Heart right ventricle (tissue), 16 donors: ENCODE measurements at regions of chr4 and their contacts with region 1.

Region 1: GRCh38 chr4:153344131-153345010 is at the start of gene MND1:
- DNase-seq: peak; percentile 86 to 87
- ATAC-seq: peak; percentile 92 to 97 (median 95)
- H3K4me3 ChIP-seq: peak within 1 kb of the TSS; percentile 66 to 91 (median 81)
- H3K27ac ChIP-seq: peak within 1 kb of the TSS in 1 of 10 donors; percentile 64
- H3K4me1 ChIP-seq: peaks cover 2 to 29% (median 17%) of the 10 kb centered on the region in 9 donors
- H3K27me3 ChIP-seq: no peaks in the 10 kb centered on the region
- CTCF ChIP-seq: peak; percentile 79 to 99 (median 99)
- total RNA-seq, gene MND1: 0.25 to 1.7 (median 0.40) TPM in 5 of 10 donors, not detected in the others

Region 2: GRCh38 chr4:152820073-152820472 is 524.3 kb before region 1 on chr4:
- intact Hi-C with region 1: no loop called
- DNase-seq: no peak
- ATAC-seq: no peak
- H3K4me3 ChIP-seq: no peak overlapping the region
- H3K27ac ChIP-seq: no peak overlapping the region
- H3K4me1 ChIP-seq: peaks cover 0 to 27% (median 4%) of the 10 kb centered on the region in 9 donors
- H3K27me3 ChIP-seq: no peaks in the 10 kb centered on the region
- CTCF ChIP-seq: no peak

Region 3: DNA sequence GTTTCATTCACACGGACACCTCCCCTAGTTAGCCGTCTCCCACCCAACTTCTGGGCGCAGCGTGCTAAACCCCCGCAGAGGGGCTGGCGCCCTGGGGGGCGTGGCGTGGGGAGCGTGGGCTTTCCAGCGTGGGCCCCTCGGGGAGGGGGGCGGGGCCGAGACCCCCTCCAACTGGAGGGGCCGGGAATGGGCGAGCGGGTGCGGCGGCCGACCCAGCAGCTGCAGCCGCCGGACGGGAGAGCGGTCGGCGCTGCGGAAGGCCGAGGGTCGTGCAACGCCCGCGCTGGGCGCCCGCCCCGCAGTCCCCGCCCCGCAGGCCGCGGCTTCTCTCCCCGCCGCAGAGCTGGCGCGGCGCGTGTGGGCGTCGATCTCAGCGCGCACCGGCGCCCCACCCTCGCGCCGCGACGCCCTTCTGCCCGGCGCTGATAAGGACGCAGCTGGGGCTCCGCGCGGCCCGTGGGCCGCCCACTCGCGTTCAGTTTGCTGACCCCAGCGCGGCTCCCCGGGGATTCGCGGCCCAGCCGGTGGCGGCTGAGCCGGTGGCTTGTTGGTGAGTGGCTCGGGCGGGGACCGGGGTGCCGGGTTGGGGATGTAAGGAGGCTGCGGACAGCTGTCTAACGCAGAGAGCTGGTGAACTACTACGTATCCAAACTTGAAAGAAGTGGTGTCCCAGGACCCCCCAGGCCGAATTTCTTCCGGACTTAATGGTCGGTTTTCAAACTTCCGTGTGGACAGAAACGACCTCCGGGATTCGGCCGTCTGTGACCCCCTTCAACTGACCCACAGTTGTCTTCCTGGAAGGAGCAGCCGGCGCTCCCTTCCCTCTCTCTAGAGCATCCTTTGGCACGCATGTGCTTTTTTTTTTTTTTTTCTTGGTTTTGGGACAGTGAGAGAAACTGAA is 406.8 kb before region 1 on chr4:
- intact Hi-C with region 1: no loop called
- DNase-seq: peak; percentile 23 to 35
- ATAC-seq: peak; percentile 31 to 67 (median 52)
- H3K4me3 ChIP-seq: peak overlapping the region; percentile 37 to 65 (median 60)
- H3K27ac ChIP-seq: peak overlapping the region in 2 of 10 donors; percentile 19 to 26
- H3K4me1 ChIP-seq: peaks cover 0 to 31% (median 23%) of the 10 kb centered on the region in 9 donors
- H3K27me3 ChIP-seq: peaks cover 0 to 96% (median 61%) of the 10 kb centered on the region in 7 donors
- CTCF ChIP-seq: no peak

Region 4: GRCh38 chr4:153260553-153261300 is 83.6 kb before region 1 on chr4:
- intact Hi-C with region 1: no loop called
- DNase-seq: no peak
- ATAC-seq: no peak
- H3K4me3 ChIP-seq: no peak overlapping the region
- H3K27ac ChIP-seq: no peak overlapping the region
- H3K4me1 ChIP-seq: peaks cover 0 to 24% (median 4%) of the 10 kb centered on the region in 9 donors
- H3K27me3 ChIP-seq: peaks cover 0 to 11% (median 0%) of the 10 kb centered on the region in 7 donors
- CTCF ChIP-seq: no peak

Region 5: DNA sequence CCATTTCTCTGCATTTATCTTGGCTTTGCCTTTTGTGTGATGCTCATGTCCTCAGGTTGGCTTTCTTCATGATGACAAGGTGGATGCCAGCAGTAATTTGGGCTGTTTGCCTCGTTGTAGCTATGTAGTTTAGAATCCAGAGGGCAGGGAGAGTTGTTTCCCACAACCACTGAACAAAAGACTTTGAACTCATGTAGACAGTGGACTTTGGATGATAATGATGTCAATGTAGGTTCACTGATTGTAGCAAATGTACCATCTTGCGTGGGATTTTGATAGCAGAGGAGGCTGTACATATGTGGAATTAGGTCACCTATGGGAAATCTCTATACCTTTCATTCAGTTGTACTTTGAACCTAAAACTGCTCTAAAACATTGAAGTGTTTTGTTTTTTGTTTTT is 41.4 kb after region 1 on chr4:
- intact Hi-C with region 1: no loop called
- DNase-seq: no peak
- ATAC-seq: no peak
- H3K4me3 ChIP-seq: no peak overlapping the region
- H3K27ac ChIP-seq: no peak overlapping the region
- H3K4me1 ChIP-seq: peaks cover 0 to 6% (median 0%) of the 10 kb centered on the region in 9 donors
- H3K27me3 ChIP-seq: no peaks in the 10 kb centered on the region
- CTCF ChIP-seq: no peak

Region 6: DNA sequence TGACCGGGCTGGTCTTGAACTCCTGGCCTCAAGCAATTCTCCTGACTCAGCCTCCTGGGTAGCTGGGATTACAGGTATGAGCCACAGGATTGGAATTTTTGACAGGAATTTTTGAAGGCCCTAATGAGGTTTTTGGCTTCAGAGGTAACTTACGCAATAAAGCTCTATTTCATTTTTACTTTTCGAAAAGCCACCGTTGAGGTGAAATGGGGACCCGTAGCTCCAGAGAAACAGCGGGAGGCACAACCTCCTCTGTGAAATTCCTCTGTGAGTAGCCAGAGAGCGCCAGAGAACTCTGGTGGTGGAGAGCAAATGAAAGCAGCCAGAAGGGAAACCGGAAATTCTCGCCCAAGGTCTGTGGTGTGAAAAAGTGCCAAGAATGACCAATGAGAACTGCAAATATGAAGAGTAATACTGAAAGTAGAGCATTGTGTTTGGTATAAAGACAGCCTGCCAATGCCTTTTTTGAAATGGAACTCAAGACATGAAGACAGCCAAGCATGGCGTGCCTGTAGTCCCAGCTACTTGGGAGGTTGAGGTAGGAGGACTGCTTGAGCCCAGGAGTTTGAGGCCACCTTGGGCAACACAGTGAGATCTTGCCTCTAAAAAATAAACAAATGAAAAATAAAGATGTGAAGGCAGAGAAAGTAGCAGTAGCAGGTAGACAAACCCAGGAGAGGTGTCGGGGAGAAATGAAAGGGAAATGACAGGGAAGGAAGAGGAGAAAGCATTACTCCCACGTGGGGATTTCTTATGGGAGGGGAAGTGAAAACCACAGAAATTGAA is 88.8 kb after region 1 on chr4:
- intact Hi-C with region 1: loop called in 5 of 10 experiments (anchors 10 kb)
- DNase-seq: peak; percentile 18 to 55
- ATAC-seq: peak; percentile 65 to 93 (median 85)
- H3K4me3 ChIP-seq: peak overlapping the region in 1 of 10 donors; percentile 33
- H3K27ac ChIP-seq: peak overlapping the region in 1 of 10 donors; percentile 48
- H3K4me1 ChIP-seq: peaks cover 0 to 17% (median 0%) of the 10 kb centered on the region in 9 donors
- H3K27me3 ChIP-seq: no peaks in the 10 kb centered on the region
- CTCF ChIP-seq: peak; percentile 31 to 79 (median 71)

Region 7: DNA sequence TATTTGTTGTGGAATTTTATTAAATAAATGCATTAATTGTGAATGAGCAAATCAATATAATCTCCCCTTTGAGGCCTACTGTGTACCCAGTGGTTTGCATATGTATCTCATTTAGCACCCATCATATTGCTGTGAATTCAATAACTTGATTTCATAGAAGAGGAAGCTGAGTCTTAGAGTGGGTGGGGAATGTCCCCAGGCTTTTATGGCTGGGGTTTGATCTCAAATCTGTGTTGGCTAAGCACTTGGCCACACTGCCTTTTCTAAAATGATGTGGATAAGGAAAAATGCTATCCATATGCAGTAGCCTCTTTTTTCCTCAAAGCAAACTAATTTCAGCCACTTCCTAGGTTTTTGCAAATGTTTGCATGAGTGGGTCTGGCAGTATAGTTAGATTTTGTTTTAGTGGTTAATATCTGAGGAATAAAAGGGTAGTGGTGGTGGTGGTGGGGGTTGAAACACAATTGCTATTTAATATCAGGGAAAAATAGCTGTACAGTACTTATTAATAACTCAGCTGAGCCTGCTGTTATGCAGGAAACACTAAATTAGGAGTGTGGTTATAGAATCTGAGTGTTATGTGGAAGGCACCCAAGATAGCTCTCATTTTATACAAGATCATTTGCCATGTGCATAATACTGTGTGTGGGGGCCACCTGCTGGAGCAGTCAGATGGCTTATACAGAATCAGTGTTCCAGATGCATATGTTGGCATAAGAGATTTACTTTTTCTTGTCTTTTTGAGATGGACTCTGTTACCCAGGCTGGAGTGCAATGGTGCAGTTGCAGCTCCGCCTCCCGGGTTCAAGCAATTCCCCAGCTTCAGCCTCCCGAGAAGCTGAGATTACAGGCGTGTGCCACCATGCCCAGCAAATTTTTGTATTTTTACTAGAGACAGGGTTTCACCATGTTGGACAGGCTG is 229.8 kb after region 1 on chr4:
- intact Hi-C with region 1: loop called in 9 of 10 experiments (anchors 1 to 5 kb)
- DNase-seq: peak; percentile 54 to 68
- ATAC-seq: peak; percentile 81 to 91 (median 89)
- H3K4me3 ChIP-seq: no peak overlapping the region
- H3K27ac ChIP-seq: peak overlapping the region in 9 of 10 donors; percentile 36 to 79 (median 74)
- H3K4me1 ChIP-seq: peaks cover under 1 to 61% (median 38%) of the 10 kb centered on the region in 9 donors
- H3K27me3 ChIP-seq: no peaks in the 10 kb centered on the region
- CTCF ChIP-seq: peak; percentile 38 to 81 (median 70)

Region 8: GRCh38 chr4:153643406-153644383 is 299.3 kb after region 1 on chr4:
- intact Hi-C with region 1: loop called in 4 of 10 experiments (anchors 5 to 10 kb)
- DNase-seq: no peak
- ATAC-seq: peak in 3 of 8 donors; percentile 38 to 64 (median 42)
- H3K4me3 ChIP-seq: no peak overlapping the region
- H3K27ac ChIP-seq: peak overlapping the region in 1 of 10 donors; percentile 27
- H3K4me1 ChIP-seq: peaks cover 0 to 32% (median 0%) of the 10 kb centered on the region in 9 donors
- H3K27me3 ChIP-seq: no peaks in the 10 kb centered on the region
- CTCF ChIP-seq: peak in 8 of 9 donors; percentile 22 to 59 (median 51)

Region 9: DNA sequence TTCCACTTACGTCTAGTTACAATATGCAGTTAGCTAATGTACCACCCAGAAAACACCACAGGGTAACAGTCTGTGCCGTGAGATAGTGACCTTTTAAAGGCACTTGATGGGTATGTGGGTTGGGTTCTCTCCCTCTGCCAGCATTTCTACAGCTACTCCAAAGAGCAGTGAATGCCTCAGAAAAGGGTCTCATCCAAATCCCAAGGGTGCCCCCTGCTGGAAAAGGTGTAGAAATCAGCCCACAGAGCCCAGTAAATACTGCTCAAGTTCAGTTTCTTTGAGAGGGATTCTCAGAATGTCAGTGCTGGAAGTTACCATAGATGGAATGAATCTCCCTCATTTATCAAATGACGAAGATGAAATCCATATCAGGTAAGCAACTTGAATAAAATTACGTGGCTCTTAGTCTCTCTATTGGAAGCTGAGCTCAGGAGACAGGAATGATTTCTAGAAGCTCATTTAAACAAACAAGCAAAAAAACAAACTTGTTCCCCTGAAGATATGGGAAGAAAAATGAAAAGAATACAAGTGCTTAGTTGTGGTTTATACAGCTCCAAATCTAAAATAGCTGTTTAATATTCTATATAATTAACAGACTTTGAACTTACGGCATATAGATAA is 405.9 kb after region 1 on chr4:
- intact Hi-C with region 1: loop called in 5 of 10 experiments (anchors 5 to 10 kb)
- DNase-seq: peak in 1 of 2 donors; percentile 59
- ATAC-seq: peak in 7 of 8 donors; percentile 52 to 81 (median 72)
- H3K4me3 ChIP-seq: no peak overlapping the region
- H3K27ac ChIP-seq: no peak overlapping the region
- H3K4me1 ChIP-seq: peaks cover 0 to 31% (median 0%) of the 10 kb centered on the region in 9 donors
- H3K27me3 ChIP-seq: peaks cover 0 to 4% (median 0%) of the 10 kb centered on the region in 7 donors
- CTCF ChIP-seq: peak; percentile 33 to 78 (median 65)